ENCODE measurements at regions of chr12 and their contacts with region 1.

Region 1: GRCh38 chr12:27014085-27014858 is at the start of gene TM7SF3:
- DNase-seq: peak; percentile 97
- ATAC-seq: peak; percentile 83
- H3K4me3 Mint-ChIP-seq: peak within 1 kb of the TSS; percentile 86
- H3K27ac Mint-ChIP-seq: peak within 1 kb of the TSS; percentile 82
- H3K4me1 Mint-ChIP-seq: peaks cover 45% of the 10 kb centered on the region
- H3K27me3 Mint-ChIP-seq: no peaks in the 10 kb centered on the region
- total RNA-seq, gene TM7SF3: 29.4 to 34.0 TPM

Region 2: GRCh38 chr12:26748741-26749431 is 265.4 kb before region 1 on chr12:
- CTCF ChIA-PET with region 1: no interaction called
- POLR2A ChIA-PET with region 1: no interaction called
- intact Hi-C with region 1: loop called in 1 of 2 experiments (anchors 1 kb)
- DNase-seq: no peak
- ATAC-seq: peak; percentile 70
- H3K4me3 Mint-ChIP-seq: peak overlapping the region; percentile 30
- H3K27ac Mint-ChIP-seq: peak overlapping the region; percentile 83
- H3K4me1 Mint-ChIP-seq: peaks cover 75% of the 10 kb centered on the region
- H3K27me3 Mint-ChIP-seq: no peaks in the 10 kb centered on the region

Region 3: DNA sequence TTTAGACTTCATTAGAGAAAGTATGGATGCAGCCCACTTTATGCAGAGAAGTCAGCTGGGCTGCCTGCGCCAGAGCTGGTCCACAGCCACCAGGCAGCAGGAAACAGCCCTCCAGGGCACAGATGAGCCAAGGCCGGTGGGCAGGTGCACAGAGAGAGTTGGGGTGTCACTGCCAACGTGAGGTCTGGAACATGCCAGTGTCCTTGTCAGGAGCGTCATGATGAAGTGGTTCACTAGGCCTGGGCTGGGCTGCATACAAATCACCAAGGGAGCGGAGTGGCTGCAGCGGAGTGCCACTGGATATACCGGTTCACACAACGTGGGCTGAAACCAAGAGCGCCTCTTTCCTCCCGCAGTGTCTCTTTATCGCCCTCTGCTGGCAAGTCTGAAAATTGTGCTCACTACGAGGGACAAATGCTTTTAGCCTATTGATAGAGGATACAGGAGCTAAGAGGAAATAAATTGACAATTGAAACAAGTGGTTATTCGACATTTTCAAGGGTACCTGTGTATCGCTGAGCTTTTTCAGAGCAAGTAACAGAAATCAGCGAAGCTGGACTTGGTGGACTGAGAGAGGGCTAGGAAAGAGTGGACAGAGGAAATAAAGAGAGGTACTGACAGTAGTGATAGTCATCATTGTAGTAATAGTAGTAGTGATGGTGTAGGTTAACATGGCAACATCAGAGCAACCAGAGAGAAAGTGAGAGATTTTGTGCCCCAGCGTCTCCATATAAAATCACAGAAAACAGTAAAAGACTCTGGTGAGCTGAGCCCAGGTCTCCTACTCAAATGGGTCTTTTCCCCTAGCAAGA is 129.3 kb before region 1 on chr12:
- CTCF ChIA-PET with region 1: interaction called, 11 read pairs
- POLR2A ChIA-PET with region 1: no interaction called
- intact Hi-C with region 1: no loop called
- DNase-seq: peak; percentile 89
- ATAC-seq: peak; percentile 97
- H3K4me3 Mint-ChIP-seq: peak overlapping the region; percentile 49
- H3K27ac Mint-ChIP-seq: no peak overlapping the region
- H3K4me1 Mint-ChIP-seq: peaks cover 10% of the 10 kb centered on the region
- H3K27me3 Mint-ChIP-seq: peaks cover 2% of the 10 kb centered on the region

Region 4: DNA sequence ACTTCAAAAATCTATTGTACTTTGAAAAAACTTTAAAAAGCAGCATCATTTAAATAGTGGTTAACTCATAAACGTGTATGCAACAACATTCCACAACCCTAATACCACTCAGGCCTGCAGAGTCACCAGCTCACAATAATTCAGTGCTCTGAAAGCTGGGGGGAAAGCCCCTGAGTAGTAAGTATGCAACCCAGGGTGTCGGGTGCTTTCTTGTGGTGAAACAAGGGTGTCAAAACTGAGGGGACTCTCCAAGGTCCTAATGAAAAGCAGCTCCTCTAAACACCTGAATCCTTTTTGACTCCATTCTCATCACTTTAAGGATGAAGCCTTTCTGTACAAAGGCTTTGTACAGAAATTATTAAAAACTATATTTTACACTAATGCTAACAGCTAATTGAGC is 42.3 kb before region 1 on chr12:
- CTCF ChIA-PET with region 1: interaction called, 4 read pairs
- POLR2A ChIA-PET with region 1: no interaction called
- intact Hi-C with region 1: loop called in 1 of 2 experiments (anchors 1 kb)
- DNase-seq: peak; percentile 83
- ATAC-seq: peak; percentile 100
- H3K4me3 Mint-ChIP-seq: no peak overlapping the region
- H3K27ac Mint-ChIP-seq: no peak overlapping the region
- H3K4me1 Mint-ChIP-seq: peaks cover 22% of the 10 kb centered on the region
- H3K27me3 Mint-ChIP-seq: no peaks in the 10 kb centered on the region

Region 5: DNA sequence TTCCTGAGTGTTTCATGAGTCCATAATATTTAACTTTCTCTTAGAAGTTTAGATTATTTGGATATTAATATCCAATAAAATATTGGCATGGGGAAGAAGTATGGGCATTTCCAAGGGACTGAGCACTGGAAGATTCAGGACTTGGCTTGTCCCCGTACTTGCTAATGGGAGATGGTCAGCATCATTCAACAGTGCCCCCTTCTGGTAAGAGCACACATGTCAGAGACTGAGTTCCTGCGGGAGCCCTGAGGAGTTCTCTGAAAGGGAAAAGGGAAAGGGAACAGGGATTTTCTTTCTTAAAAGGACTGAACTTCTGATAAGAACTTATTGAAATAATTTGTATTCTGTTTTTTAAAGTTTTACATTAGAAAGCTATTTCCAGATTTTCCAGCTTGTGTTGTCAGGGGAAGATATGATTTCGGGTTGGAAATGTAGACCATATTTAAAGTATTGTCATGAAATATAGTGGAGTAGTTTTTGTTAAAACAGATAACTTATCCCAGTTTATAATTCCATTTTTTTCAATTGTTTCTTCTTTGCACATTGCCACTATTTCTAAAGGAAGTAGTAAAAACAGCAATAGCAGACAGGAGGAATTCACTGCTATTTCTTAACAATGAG is 127.9 kb after region 1 on chr12:
- CTCF ChIA-PET with region 1: interaction called, 4 read pairs
- POLR2A ChIA-PET with region 1: no interaction called
- intact Hi-C with region 1: loop called (anchors 1 to 2 kb)
- DNase-seq: peak; percentile 63
- ATAC-seq: peak; percentile 70
- H3K4me3 Mint-ChIP-seq: no peak overlapping the region
- H3K27ac Mint-ChIP-seq: no peak overlapping the region
- H3K4me1 Mint-ChIP-seq: peaks cover 12% of the 10 kb centered on the region
- H3K27me3 Mint-ChIP-seq: no peaks in the 10 kb centered on the region

Region 6: GRCh38 chr12:27305673-27306456 is 291.6 kb after region 1 on chr12:
- CTCF ChIA-PET with region 1: interaction called, 152 read pairs
- POLR2A ChIA-PET with region 1: interaction called, 3 read pairs
- intact Hi-C with region 1: loop called (anchors 1 kb)
- DNase-seq: no peak
- ATAC-seq: no peak
- H3K4me3 Mint-ChIP-seq: no peak overlapping the region
- H3K27ac Mint-ChIP-seq: no peak overlapping the region
- H3K4me1 Mint-ChIP-seq: peaks cover 5% of the 10 kb centered on the region
- H3K27me3 Mint-ChIP-seq: no peaks in the 10 kb centered on the region